Heart left ventricle (tissue), 16 donors: ENCODE measurements at regions of chr14 and their contacts with region 1.

Region 1: DNA sequence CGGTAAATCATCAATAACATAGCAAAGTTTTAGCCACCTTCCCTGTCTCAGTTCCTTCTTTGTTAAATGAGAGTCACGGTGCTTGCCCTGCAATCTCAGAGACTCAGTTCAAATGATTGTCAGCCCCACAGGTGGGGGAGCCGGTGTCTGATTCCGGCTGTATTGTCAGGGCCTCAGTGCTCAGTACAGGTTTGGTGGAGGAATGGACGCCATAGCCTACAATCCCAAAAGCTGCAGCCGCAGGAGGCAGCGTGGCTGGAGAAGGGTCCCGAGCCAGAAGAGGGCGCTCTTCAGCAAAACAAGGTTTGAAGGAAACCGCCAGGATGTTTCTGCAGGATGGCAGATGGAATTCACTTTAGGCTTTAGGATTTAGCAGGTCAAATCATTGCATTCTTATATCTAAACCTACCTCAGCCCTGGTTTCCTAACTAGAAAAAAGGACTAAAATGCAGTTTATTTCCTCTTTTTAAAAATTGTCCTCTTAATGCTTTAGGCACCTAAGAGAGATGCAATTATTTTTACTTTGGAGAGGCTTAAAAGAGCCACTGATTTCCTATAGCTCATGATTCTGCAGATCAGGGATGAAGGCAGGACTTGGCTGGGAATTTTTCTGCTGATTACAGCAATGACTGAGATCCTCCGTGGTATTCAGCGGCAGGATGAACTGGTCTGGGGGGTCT is 29.2 kb downstream of the FOS start:
- DNase-seq: peak; percentile 84 to 92 (median 88)
- ATAC-seq: peak; percentile 60 to 74 (median 64)
- H3K4me3 ChIP-seq: no peak overlapping the region
- H3K27ac ChIP-seq: no peak overlapping the region
- H3K4me1 ChIP-seq: peaks cover 0 to 41% (median 14%) of the 10 kb centered on the region in 12 donors
- H3K27me3 ChIP-seq: no peaks in the 10 kb centered on the region
- CTCF ChIP-seq: peak; percentile 83 to 95 (median 93)
- POLR2A ChIP-seq: no peak

Region 2: DNA sequence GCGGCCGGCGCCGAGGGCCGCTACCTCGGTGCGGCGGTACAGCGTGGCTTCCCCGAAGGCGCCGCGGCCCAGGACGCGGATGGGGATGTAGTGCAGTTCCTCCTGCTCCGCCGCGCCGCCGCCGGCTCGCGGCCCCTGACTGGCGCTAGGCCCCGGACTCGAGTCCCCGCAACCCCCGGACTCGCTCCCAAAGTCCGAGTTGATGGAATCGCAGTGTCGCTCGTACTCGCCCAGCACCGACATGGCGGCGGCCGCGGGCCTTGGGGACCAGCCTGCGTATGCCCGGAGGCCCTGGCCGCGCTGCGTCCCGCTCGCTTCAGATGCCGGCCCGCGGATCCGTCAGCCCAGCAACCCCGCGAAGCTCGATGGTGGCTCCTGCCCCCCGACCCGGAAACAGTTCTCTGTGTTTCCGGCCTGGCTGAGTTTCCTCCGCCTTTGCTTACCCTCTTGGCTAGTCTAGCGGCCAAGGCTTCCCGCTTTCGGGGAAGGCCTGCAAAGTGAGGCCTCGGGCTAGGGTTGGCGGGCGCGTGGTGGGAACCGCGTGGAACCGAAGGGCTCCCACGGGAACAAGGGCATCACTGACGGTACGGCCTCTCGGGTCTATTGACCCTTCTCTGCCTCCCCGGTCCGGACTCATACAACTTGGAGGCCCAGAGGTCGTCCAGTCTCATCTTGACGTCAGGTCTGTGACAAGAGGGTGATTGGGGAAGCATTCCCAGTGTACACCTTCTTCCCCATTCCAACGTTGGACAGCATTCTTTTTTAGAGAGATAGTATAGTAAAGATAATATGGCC is 181.0 kb before region 1 on chr14 and contains the start of gene NEK9:
- intact Hi-C with region 1: loop called in 7 of 10 experiments (anchors 1 to 2 kb)
- DNase-seq: peak; percentile 93 to 94 (median 93)
- ATAC-seq: peak; percentile 94 to 96 (median 96)
- H3K4me3 ChIP-seq: peak within 1 kb of the TSS; percentile 57 to 96 (median 80)
- H3K27ac ChIP-seq: peak within 1 kb of the TSS; percentile 87 to 99 (median 97)
- H3K4me1 ChIP-seq: peaks cover 3 to 47% (median 29%) of the 10 kb centered on the region in 12 donors
- H3K27me3 ChIP-seq: no peaks in the 10 kb centered on the region
- CTCF ChIP-seq: peak in 2 of 12 donors; percentile 11 to 14
- POLR2A ChIP-seq: peak in 1 of 2 donors; percentile 56
- total RNA-seq, gene NEK9: 69.0 to 114 (median 98.3) TPM

Region 3: GRCh38 chr14:75340921-75341320 is 33.1 kb after region 1 on chr14:
- intact Hi-C with region 1: loop called in 1 of 10 experiments (anchors 2 kb)
- DNase-seq: peak; percentile 90 to 97 (median 91)
- ATAC-seq: peak; percentile 96 to 97 (median 97)
- H3K4me3 ChIP-seq: peak overlapping the region in 1 of 12 donors; percentile 26
- H3K27ac ChIP-seq: peak overlapping the region; percentile 71 to 95 (median 88)
- H3K4me1 ChIP-seq: peaks cover 10 to 79% (median 32%) of the 10 kb centered on the region in 12 donors
- H3K27me3 ChIP-seq: no peaks in the 10 kb centered on the region
- CTCF ChIP-seq: no peak
- POLR2A ChIP-seq: peak in 1 of 2 donors; percentile 81

Region 4: GRCh38 chr14:75427482-75428229 is 119.8 kb after region 1 on chr14 and contains the start of gene JDP2:
- intact Hi-C with region 1: loop called in 9 of 10 experiments (anchors 2 to 10 kb)
- DNase-seq: peak; percentile 96 to 98 (median 97)
- ATAC-seq: peak; percentile 88 to 96 (median 93)
- H3K4me3 ChIP-seq: peak within 1 kb of the TSS; percentile 47 to 96 (median 79)
- H3K27ac ChIP-seq: peak within 1 kb of the TSS; percentile 75 to 98 (median 95)
- H3K4me1 ChIP-seq: peaks cover 4 to 57% (median 50%) of the 10 kb centered on the region in 12 donors
- H3K27me3 ChIP-seq: no peaks in the 10 kb centered on the region
- CTCF ChIP-seq: peak in 9 of 12 donors; percentile 8 to 48 (median 23)
- POLR2A ChIP-seq: peak; percentile 21 to 83
- total RNA-seq, gene JDP2: 12.2 to 72.6 (median 28.1) TPM

Region 5: DNA sequence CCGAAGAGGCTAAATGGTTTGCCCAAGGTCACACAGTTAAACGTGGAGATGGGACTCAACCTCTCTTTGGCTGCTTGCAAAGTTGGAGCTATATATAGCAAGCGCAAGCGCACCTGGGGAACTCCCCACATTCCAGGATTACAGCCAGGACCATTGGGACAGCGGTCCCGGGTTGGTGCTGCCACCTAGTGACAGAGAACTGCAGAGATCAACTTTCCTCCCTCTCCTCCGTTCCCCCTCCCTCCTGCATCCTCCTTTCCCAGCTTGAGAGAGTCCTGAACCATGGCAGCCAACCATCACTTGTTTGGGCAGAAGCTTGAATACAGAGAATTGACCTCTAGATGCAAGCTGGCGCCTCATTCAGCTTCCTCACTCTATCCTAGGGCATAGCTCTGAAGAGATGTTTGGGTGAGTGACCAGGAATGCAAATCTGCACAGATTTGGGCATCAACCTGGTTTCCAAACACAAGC is 253.2 kb after region 1 on chr14:
- intact Hi-C with region 1: loop called in 7 of 10 experiments (anchors 2 to 5 kb)
- DNase-seq: peak in 4 of 5 donors; percentile 61 to 73 (median 67)
- ATAC-seq: peak; percentile 63 to 88 (median 87)
- H3K4me3 ChIP-seq: no peak overlapping the region
- H3K27ac ChIP-seq: no peak overlapping the region
- H3K4me1 ChIP-seq: peaks cover 0 to 17% (median 0%) of the 10 kb centered on the region in 12 donors
- H3K27me3 ChIP-seq: no peaks in the 10 kb centered on the region
- CTCF ChIP-seq: peak; percentile 57 to 80 (median 70)
- POLR2A ChIP-seq: no peak